ENCODE measurements at regions of chr7 and their contacts with region 1.

Region 1: DNA sequence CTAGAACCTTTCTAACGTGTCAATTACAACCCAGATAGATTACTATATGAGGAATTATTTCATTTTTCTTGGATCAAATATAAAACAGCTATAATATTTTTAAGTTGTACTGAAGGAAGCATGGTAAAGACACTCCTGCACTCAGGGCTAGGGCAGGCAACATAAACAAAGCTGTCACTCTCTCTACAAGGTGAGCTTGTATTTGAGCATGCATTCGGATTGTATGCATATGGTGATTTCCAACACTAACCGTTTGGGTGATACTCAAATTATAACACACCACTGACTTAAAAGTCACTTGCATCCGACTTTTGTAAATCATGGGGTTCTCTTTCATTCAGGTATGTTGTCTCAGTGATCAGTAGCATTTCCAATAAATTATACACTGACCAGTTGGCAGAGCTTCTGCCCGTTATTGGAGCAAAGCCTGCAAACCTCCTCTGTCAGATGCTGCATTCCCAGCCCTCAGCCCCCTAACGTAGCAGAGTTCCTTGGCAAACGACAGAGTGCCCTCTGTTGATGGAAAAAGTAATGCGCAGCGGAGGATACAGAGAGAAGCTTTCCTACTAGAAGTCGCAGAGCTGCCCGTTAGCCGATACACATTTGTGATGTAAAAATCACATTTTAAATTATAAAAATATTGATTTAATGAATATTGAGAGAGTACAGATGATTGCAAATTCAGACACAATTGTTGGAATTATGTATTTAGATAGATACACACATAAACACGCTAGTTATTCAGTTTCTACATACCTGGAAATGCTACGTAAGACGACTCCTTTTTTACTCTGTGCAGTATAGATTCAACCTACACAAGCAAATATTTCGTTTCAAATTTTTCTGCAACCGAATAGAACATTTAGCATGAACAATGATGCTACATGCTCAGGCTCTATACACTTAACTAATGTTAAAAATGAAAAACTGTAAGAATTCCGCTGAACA is 173.9 kb upstream of the SP4 start:
- DNase-seq: peak; percentile 65
- ATAC-seq: peak; percentile 81
- H3K4me3 Mint-ChIP-seq: no peak overlapping the region
- H3K27ac Mint-ChIP-seq: no peak overlapping the region
- H3K4me1 Mint-ChIP-seq: no peaks in the 10 kb centered on the region
- H3K27me3 Mint-ChIP-seq: peaks cover 46% of the 10 kb centered on the region

Region 2: DNA sequence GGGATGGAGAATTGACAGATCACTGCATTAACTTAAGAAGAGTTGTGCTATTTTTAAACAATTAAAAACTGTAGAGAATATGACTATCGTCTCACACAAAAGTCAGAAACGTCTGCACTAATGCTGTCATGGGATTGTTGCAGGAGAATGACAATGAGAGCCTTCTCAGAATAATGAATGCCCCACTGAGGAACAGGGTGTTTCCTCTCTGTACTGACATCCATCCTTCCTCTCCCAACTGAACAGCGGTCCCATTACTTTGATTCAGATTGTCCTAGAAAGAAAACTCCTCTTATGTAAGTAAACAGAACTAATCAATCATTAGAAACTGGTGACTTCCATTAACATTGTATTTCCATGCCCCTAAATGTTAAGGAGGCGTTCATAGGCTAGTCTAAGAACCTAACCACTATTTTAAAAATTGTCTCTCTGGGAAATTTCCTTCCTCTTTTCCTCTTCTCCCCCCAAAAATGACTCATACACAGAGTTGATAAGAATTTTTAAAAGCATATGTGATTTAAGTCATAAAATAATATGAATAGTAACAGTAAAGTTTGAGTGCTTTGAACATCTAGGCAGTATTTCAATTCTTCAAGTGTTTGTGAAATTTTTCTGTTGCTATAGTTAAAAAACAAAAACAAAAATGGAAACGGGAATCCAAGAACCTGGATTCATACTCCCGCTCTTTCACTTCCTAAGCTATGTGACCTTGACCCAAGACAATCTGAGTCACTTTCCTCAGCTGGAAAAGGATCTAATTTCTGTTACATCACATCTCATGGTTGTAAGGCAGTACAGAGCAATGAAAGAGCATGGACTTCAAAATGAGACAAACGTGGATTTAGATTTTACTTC is 1024.1 kb before region 1 on chr7:
- CTCF ChIA-PET with region 1: no interaction called
- POLR2A ChIA-PET with region 1: no interaction called
- intact Hi-C with region 1: no loop called
- DNase-seq: no peak
- ATAC-seq: no peak
- H3K4me3 Mint-ChIP-seq: no peak overlapping the region
- H3K27ac Mint-ChIP-seq: no peak overlapping the region
- H3K4me1 Mint-ChIP-seq: no peaks in the 10 kb centered on the region
- H3K27me3 Mint-ChIP-seq: peaks cover 12% of the 10 kb centered on the region

Region 3: DNA sequence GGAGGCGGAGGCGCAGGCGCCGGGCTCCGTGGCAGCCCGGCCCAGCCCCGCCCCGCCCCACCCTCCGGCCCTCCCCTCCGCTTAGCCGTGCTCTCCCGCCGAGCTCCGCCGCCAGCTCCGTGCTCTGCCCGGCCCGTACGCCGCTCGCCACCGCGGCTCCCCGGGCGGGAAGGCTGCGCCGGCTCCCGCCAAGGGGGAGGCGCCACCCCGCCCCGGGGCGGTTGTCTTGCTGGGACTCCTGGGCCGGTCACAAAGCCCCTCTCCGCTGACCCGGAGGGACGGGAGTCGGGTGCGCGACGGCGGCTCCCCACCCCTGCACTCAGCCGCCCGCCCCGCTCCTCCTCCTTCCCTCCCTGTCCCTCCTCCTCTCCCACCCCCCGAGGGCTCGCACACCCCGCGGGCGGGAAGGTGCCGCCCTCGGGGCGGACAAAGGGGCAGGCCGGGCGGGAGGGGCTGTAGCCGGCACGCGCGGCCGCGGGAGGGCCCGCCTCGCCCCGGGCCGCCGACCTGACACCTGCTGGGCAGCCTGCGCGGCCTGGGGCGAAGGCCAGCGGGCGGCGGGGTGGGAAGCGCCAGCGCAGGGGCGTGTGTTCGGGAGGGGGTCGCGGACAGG is 455.8 kb before region 1 on chr7:
- CTCF ChIA-PET with region 1: interaction called, 3 read pairs
- POLR2A ChIA-PET with region 1: no interaction called
- intact Hi-C with region 1: loop called (anchors 5 kb)
- DNase-seq: peak; percentile 30
- ATAC-seq: peak; percentile 81
- H3K4me3 Mint-ChIP-seq: no peak overlapping the region
- H3K27ac Mint-ChIP-seq: no peak overlapping the region
- H3K4me1 Mint-ChIP-seq: peaks cover 16% of the 10 kb centered on the region
- H3K27me3 Mint-ChIP-seq: peaks cover 49% of the 10 kb centered on the region

Region 4: GRCh38 chr7:21393937-21394336 is 139.9 kb after region 1 on chr7:
- CTCF ChIA-PET with region 1: no interaction called
- POLR2A ChIA-PET with region 1: no interaction called
- intact Hi-C with region 1: no loop called
- DNase-seq: no peak
- ATAC-seq: no peak
- H3K4me3 Mint-ChIP-seq: no peak overlapping the region
- H3K27ac Mint-ChIP-seq: no peak overlapping the region
- H3K4me1 Mint-ChIP-seq: no peaks in the 10 kb centered on the region
- H3K27me3 Mint-ChIP-seq: no peaks in the 10 kb centered on the region

Region 5: GRCh38 chr7:21526007-21526406 is 272.0 kb after region 1 on chr7:
- CTCF ChIA-PET with region 1: interaction called, 3 read pairs
- POLR2A ChIA-PET with region 1: no interaction called
- intact Hi-C with region 1: loop called in 1 of 2 experiments (anchors 1 kb)
- DNase-seq: no peak
- ATAC-seq: no peak
- H3K4me3 Mint-ChIP-seq: no peak overlapping the region
- H3K27ac Mint-ChIP-seq: no peak overlapping the region
- H3K4me1 Mint-ChIP-seq: no peaks in the 10 kb centered on the region
- H3K27me3 Mint-ChIP-seq: no peaks in the 10 kb centered on the region

Region 6: DNA sequence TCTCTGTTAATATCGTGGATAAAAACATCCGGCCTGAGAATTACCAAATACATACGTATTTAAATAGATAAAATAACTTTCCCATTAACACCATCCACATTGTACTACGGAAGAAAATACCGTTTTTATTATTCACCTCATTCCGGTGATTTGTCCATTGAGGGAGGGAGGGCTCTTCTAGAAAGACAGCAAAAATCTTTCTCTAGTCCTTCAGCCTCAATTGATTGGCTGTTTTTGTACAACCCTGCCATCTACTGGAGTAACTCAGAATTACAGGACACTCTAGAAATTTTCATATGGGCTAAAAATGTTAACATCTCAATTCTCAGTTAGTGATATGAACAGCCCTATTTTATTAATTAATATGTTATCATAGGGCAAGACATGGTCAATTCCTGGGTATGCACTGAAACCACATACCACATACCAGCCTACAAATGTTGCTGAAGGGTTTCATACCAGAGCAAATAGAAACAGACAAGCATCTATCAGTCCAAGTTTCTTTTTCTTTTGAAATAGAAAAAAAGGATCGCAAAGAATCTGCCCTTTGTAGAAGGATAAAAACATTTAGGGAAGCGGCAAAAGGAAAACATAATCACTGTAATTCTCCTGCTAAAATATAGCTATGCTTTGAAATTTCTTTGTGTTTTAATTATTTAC is 747.5 kb after region 1 on chr7:
- CTCF ChIA-PET with region 1: interaction called, 3 read pairs
- POLR2A ChIA-PET with region 1: no interaction called
- intact Hi-C with region 1: loop called (anchors 1 kb)
- DNase-seq: peak; percentile 16
- ATAC-seq: peak; percentile 57
- H3K4me3 Mint-ChIP-seq: no peak overlapping the region
- H3K27ac Mint-ChIP-seq: no peak overlapping the region
- H3K4me1 Mint-ChIP-seq: peaks cover 2% of the 10 kb centered on the region
- H3K27me3 Mint-ChIP-seq: no peaks in the 10 kb centered on the region